B cell (primary cell): ENCODE measurements at regions of chr19 and their contacts with region 1.

Region 1: DNA sequence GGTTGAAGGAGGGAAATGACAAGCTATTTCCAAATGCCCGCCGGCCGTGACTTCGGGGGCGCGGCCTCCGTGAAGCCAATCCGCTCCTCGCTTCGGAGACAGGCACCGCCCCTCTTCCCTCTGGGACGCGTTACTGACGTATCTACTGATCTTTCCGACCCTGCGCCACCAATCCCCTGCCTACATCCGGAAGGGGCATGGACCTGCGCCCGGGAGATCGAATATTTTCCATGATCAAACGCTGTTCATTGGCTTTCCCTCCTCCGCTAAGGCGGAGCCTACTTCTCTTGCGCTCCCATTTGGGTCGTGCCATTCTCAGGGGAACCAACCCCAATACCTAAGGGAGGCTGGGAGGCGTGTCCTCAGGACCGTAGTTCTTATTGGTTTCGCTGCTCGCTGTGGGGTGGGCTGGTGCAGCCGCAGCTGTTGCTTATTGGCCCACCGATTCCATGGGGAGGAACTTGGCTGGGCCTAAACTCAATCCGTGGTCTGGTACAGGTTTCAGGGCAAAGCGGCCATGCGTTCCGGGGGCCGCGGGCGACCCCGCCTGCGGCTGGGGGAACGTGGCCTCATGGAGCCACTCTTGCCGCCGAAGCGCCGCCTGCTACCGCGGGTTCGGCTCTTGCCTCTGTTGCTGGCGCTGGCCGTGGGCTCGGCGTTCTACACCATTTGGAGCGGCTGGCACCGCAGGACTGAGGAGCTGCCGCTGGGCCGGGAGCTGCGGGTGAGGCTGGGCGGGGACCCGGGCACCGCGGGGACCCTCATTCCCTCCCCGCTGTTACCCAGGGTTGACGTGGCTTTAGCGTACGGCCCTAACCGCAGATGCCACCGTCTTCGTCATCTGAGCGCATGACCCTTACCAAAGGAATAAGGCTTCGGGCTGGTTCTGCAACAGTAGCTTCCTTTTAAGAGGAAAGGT is at the start of gene QPCTL:
- DNase-seq: peak; percentile 99
- ATAC-seq: peak; percentile 85
- H3K4me3 ChIP-seq: peak within 1 kb of the TSS; percentile 81 to 96 (median 88)
- H3K4me3 Mint-ChIP-seq: peak within 1 kb of the TSS; percentile 93
- H3K27ac ChIP-seq: peak within 1 kb of the TSS; percentile 89 to 94
- H3K27ac Mint-ChIP-seq: peak within 1 kb of the TSS; percentile 92
- H3K4me1 ChIP-seq: peaks cover 15 to 22% of the 10 kb centered on the region in 2 donors
- H3K4me1 Mint-ChIP-seq: peaks cover 28% of the 10 kb centered on the region
- H3K27me3 ChIP-seq: no peaks in the 10 kb centered on the region
- H3K27me3 Mint-ChIP-seq: no peaks in the 10 kb centered on the region
- CTCF ChIP-seq: no peak
- total RNA-seq, gene QPCTL: 50.9 and 61.3 TPM in 2 replicates

Region 2: GRCh38 chr19:44890366-44891015 is 802.0 kb before region 1 on chr19:
- CTCF ChIA-PET with region 1: no interaction called
- POLR2A ChIA-PET with region 1: no interaction called
- intact Hi-C with region 1: loop called (anchors 2 kb)
- DNase-seq: peak; percentile 100
- ATAC-seq: peak; percentile 78
- H3K4me3 ChIP-seq: peak overlapping the region; percentile 65 to 90 (median 73)
- H3K4me3 Mint-ChIP-seq: peak overlapping the region; percentile 92
- H3K27ac ChIP-seq: peak overlapping the region; percentile 87 to 98
- H3K27ac Mint-ChIP-seq: peak overlapping the region; percentile 94
- H3K4me1 ChIP-seq: peaks cover 16 to 21% of the 10 kb centered on the region in 2 donors
- H3K4me1 Mint-ChIP-seq: peaks cover 29% of the 10 kb centered on the region
- H3K27me3 ChIP-seq: no peaks in the 10 kb centered on the region
- H3K27me3 Mint-ChIP-seq: no peaks in the 10 kb centered on the region
- CTCF ChIP-seq: no peak

Region 3: GRCh38 chr19:45506246-45506990 is 186.0 kb before region 1 on chr19:
- CTCF ChIA-PET with region 1: interaction called, 3 read pairs
- POLR2A ChIA-PET with region 1: interaction called, 4 read pairs
- intact Hi-C with region 1: loop called (anchors 5 kb)
- DNase-seq: peak; percentile 98
- ATAC-seq: peak; percentile 74
- H3K4me3 ChIP-seq: peak overlapping the region; percentile 63 to 96 (median 84)
- H3K4me3 Mint-ChIP-seq: peak overlapping the region; percentile 94
- H3K27ac ChIP-seq: peak overlapping the region; percentile 83 to 87
- H3K27ac Mint-ChIP-seq: peak overlapping the region; percentile 94
- H3K4me1 ChIP-seq: peaks cover 26 to 43% of the 10 kb centered on the region in 2 donors
- H3K4me1 Mint-ChIP-seq: peaks cover 54% of the 10 kb centered on the region
- H3K27me3 ChIP-seq: no peaks in the 10 kb centered on the region
- H3K27me3 Mint-ChIP-seq: no peaks in the 10 kb centered on the region
- CTCF ChIP-seq: peak; percentile 63

Region 4: DNA sequence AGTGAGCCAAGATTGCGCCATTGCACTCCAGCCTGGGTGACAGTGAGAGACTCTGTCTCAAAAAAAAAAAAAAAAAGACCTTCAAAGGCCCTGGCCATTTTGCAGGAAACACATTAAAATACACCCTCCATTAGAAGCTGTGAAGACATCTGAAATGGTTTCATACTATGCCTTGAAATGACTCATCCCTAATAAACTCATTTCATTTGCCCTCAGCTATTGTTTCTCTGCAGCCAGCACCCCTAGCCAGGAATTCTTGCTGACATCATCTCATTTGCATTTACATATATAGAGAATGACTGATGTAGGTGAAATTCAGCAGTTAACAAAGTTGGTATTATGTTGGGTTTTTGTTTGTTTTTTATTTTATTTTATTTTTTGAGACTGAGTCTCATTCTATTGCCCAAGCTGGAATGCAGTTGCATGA is 61.9 kb before region 1 on chr19:
- CTCF ChIA-PET with region 1: no interaction called
- POLR2A ChIA-PET with region 1: no interaction called
- intact Hi-C with region 1: no loop called
- DNase-seq: no peak
- ATAC-seq: no peak
- H3K4me3 ChIP-seq: no peak overlapping the region
- H3K4me3 Mint-ChIP-seq: no peak overlapping the region
- H3K27ac ChIP-seq: no peak overlapping the region
- H3K27ac Mint-ChIP-seq: no peak overlapping the region
- H3K4me1 ChIP-seq: no peaks in the 10 kb centered on the region
- H3K4me1 Mint-ChIP-seq: peaks cover 1% of the 10 kb centered on the region
- H3K27me3 ChIP-seq: no peaks in the 10 kb centered on the region
- H3K27me3 Mint-ChIP-seq: no peaks in the 10 kb centered on the region
- CTCF ChIP-seq: no peak

Region 5: DNA sequence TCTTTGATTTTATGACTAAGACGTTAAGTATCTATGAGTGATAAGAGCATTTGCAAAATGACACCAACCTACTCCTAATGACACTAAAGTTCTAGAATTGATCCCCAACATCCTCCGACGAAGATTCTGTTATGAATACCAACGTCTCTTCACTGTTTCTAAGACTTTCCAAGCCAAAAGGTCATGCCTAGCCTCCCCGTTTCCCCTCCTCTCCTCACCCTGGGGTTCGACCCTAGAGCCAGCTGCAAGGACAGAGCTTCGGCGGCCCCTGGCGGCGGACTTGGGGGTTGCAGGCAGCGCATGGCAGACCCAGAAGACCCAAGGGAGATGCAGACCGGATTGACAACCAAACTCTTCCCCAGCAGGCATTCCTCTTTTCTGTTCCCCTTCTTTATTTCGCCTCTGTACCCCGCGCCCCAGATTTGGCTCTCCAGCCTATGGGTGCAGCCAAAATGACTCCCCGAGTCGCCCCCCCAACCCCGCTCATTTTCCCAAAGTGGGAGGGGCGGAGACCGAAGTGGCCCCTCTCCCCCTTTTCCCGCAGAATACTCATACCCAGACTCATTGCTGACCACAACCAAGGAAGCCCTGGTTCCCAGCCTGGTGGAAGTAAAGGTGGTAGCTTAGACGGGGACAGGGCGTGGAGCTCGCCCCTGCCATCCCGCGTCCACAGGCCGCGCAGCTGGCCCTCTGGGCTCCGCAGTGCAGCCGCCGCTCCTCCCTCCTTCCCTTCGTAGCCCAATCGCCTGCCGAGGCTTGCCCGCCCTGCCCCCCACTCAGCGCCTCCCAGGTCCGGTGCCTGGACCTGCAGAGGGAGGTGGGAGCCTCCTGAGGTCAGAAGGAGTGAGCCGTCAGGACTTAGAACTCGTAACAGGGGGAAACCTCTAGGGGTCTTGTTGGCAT is 49.2 kb before region 1 on chr19:
- CTCF ChIA-PET with region 1: interaction called, 24 read pairs
- POLR2A ChIA-PET with region 1: interaction called, 9 read pairs
- intact Hi-C with region 1: loop called (anchors 2 kb)
- DNase-seq: peak; percentile 95
- ATAC-seq: peak; percentile 46
- H3K4me3 ChIP-seq: peak overlapping the region in 3 of 5 experiments; percentile 55 to 81 (median 62)
- H3K4me3 Mint-ChIP-seq: peak overlapping the region; percentile 85
- H3K27ac ChIP-seq: peak overlapping the region; percentile 86 to 93
- H3K27ac Mint-ChIP-seq: peak overlapping the region; percentile 92
- H3K4me1 ChIP-seq: peaks cover 39 to 65% of the 10 kb centered on the region in 2 donors
- H3K4me1 Mint-ChIP-seq: peaks cover 50% of the 10 kb centered on the region
- H3K27me3 ChIP-seq: peaks cover 0 to 13% (median 5%) of the 10 kb centered on the region in 4 experiments
- H3K27me3 Mint-ChIP-seq: peaks cover 6% of the 10 kb centered on the region
- CTCF ChIP-seq: peak; percentile 96

Region 6: DNA sequence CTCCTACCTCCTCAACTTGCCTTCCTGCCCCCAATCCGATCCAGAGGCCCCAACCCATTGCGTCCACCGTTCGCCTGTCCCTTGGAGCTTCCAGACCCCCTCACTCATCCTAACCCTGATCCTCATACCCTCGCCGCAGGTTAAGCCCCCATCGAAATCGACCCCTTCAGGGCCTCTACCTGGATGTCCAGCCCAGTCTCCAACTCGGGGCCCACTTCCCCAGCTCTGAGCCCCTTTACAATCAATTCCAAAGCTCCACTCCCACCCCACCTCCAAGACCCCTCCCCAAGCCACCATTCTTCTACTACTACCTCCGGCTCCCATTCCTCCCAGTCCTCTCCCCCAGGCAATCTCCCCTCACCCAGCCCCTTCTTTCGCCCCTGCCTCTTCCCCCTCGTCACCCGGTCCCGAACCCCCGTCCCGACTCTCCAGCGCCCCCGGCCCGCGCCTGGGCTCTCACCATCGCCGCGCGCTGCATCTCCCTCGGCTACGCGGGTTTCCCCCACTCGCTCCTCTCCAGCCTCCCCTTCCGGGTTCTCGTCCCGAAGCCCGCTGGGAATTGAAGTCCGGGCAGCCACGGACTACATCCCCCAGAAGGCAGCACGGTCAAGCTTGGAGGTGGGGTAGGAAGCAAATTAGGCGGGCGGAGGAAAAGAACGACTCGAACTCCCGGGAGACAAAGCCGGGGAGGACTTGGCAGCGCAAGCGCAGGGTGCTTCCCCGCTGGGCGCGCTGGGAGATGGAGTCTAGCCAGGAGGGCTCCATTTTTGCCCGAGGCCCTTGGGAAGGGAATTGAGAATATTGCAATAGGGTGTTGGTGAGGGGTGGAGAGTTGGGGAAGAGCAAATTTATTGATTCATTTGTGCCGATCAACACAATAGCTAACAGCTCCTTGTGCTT is 38.2 kb after region 1 on chr19 and contains the start of gene FBXO46:
- CTCF ChIA-PET with region 1: interaction called, 8 read pairs
- POLR2A ChIA-PET with region 1: interaction called, 8 read pairs
- intact Hi-C with region 1: loop called (anchors 1 kb)
- DNase-seq: peak; percentile 96
- ATAC-seq: peak; percentile 97
- H3K4me3 ChIP-seq: peak within 1 kb of the TSS; percentile 68 to 98 (median 87)
- H3K4me3 Mint-ChIP-seq: peak within 1 kb of the TSS; percentile 94
- H3K27ac ChIP-seq: peak within 1 kb of the TSS; percentile 54 to 94
- H3K27ac Mint-ChIP-seq: peak within 1 kb of the TSS; percentile 94
- H3K4me1 ChIP-seq: peaks cover 11 to 25% of the 10 kb centered on the region in 2 donors
- H3K4me1 Mint-ChIP-seq: peaks cover 28% of the 10 kb centered on the region
- H3K27me3 ChIP-seq: no peaks in the 10 kb centered on the region
- H3K27me3 Mint-ChIP-seq: no peaks in the 10 kb centered on the region
- CTCF ChIP-seq: peak; percentile 26
- total RNA-seq, gene FBXO46: 43.7 and 44.5 TPM in 2 replicates

Region 7: GRCh38 chr19:45994989-45995714 is 302.7 kb after region 1 on chr19 and contains the start of gene CCDC61:
- CTCF ChIA-PET with region 1: no interaction called
- POLR2A ChIA-PET with region 1: no interaction called
- intact Hi-C with region 1: loop called (anchors 1 kb)
- DNase-seq: peak; percentile 99
- ATAC-seq: peak; percentile 93
- H3K4me3 ChIP-seq: peak within 1 kb of the TSS; percentile 71 to 92 (median 78)
- H3K4me3 Mint-ChIP-seq: peak within 1 kb of the TSS; percentile 58
- H3K27ac ChIP-seq: peak within 1 kb of the TSS; percentile 55 to 84
- H3K27ac Mint-ChIP-seq: no peak within 1 kb of the TSS
- H3K4me1 ChIP-seq: peaks cover 19 to 21% of the 10 kb centered on the region in 2 donors
- H3K4me1 Mint-ChIP-seq: peaks cover 27% of the 10 kb centered on the region
- H3K27me3 ChIP-seq: peaks cover 0 to 9% (median 5%) of the 10 kb centered on the region in 4 experiments
- H3K27me3 Mint-ChIP-seq: peaks cover 21% of the 10 kb centered on the region
- CTCF ChIP-seq: no peak
- total RNA-seq, gene CCDC61: 30.1 and 37.0 TPM in 2 replicates